ENCODE measurements at regions of chr1 and their contacts with region 1.

Region 1: GRCh38 chr1:241640029-241640818 is at the starts of genes CHML and OPN3:
- DNase-seq: peak; percentile 96
- ATAC-seq: peak; percentile 95
- H3K4me3 Mint-ChIP-seq: peak within 1 kb of the TSS; percentile 93
- H3K27ac Mint-ChIP-seq: peak within 1 kb of the TSS; percentile 91
- H3K4me1 Mint-ChIP-seq: peaks cover 55% of the 10 kb centered on the region
- H3K27me3 Mint-ChIP-seq: no peaks in the 10 kb centered on the region
- CTCF ChIP-seq: no peak
- total RNA-seq, gene CHML: 28.3 and 35.2 TPM in 2 replicates
- total RNA-seq, gene OPN3: 31.5 and 32.1 TPM in 2 replicates

Region 2: DNA sequence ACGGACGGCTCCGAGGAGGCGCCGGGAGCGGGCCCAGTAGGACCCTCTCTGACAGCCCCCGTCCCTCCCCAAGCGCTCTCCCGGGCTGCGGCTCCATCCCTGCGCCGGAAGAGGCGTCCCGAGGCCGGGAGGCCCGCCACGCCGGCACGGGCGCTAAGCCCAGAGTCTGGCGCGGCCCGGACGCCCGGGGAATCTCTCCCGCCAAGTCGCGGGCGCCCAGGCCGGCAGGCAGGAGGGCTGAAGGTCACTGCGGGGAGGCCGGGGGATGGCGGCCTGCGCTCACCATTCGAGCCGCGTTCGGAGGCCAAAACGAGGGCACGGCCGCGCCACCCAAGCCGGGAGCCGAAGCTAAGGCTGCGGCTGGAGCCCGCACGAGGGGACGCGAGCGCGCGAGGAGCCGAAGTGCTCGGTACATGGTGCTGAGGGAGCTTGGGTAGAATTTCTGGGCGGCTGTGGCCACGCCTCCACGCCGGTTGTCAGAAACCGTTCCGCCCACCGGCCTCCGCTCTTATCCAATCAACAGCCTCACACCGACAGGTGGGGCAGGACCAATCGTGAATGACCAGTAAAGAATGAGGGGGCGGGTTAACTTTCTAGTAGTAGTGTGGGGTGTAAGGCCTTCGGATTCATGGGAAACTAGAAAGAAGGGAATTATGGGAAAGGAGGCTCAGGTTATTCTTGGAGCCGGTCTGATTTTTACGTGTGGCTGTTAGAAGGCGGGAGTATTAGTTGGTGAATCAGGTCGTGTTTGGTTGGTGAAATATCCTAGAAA is 120.7 kb before region 1 on chr1 and contains the start of gene FH:
- CTCF ChIA-PET with region 1: no interaction called
- POLR2A ChIA-PET with region 1: interaction called, 14 read pairs
- intact Hi-C with region 1: loop called (anchors 1 kb)
- DNase-seq: peak; percentile 87
- ATAC-seq: peak; percentile 98
- H3K4me3 Mint-ChIP-seq: peak within 1 kb of the TSS; percentile 91
- H3K27ac Mint-ChIP-seq: peak within 1 kb of the TSS; percentile 72
- H3K4me1 Mint-ChIP-seq: peaks cover 21% of the 10 kb centered on the region
- H3K27me3 Mint-ChIP-seq: no peaks in the 10 kb centered on the region
- CTCF ChIP-seq: no peak
- total RNA-seq, gene FH: 56.0 and 58.3 TPM in 2 replicates

Region 3: GRCh38 chr1:241600496-241600901 is 39.7 kb before region 1 on chr1:
- CTCF ChIA-PET with region 1: no interaction called
- POLR2A ChIA-PET with region 1: interaction called, 6 read pairs
- intact Hi-C with region 1: loop called (anchors 5 kb)
- DNase-seq: no peak
- ATAC-seq: peak; percentile 64
- H3K4me3 Mint-ChIP-seq: peak overlapping the region; percentile 9
- H3K27ac Mint-ChIP-seq: peak overlapping the region; percentile 78
- H3K4me1 Mint-ChIP-seq: peaks cover 74% of the 10 kb centered on the region
- H3K27me3 Mint-ChIP-seq: no peaks in the 10 kb centered on the region
- CTCF ChIP-seq: no peak

Region 4: DNA sequence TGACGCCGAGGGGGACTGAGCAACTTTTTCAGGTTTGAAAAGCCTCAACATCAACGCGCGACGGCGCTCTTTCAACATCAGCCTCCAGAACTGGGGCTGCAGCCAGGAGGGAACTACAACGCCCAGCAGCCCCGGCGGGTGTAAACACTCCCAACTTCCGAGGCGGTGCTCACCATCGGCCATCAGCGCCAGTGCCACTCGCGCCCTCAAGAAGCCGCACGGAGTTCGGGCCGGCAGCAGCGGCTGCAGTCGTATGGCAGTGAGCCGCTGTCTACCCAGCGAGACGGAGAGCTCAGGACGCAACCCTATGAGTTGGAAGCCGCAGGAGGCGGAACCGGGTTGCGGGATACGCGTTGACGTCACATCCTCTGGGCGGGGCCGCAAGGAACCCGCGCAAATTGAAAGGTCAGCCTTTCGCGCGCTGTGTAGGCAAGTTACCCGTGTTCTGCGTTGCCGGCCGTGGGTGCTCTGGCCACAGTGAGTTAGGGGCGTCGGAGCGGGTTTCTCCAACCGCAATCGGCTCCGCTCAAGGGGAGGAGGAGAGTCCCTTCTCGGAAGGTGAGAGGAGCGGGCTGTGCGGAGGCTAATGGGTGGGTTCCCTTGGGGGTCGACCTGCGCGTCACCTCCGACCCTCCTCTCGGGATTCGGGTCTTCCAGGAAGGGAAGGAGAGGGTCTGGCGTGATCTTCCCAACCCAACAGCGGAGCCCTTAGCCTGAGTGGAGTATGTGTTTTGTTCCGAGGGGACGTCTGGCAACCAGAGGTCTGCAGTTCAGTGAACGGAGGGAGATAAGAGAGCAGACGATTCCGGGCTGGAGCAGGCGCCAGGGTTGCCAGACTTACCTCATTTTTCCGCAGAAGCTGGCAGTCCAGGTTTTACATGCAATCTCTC is 207.8 kb after region 1 on chr1 and contains the start of gene EXO1:
- CTCF ChIA-PET with region 1: no interaction called
- POLR2A ChIA-PET with region 1: interaction called, 8 read pairs
- intact Hi-C with region 1: loop called (anchors 1 kb)
- DNase-seq: peak; percentile 91
- ATAC-seq: peak; percentile 98
- H3K4me3 Mint-ChIP-seq: peak within 1 kb of the TSS; percentile 100
- H3K27ac Mint-ChIP-seq: peak within 1 kb of the TSS; percentile 99
- H3K4me1 Mint-ChIP-seq: peaks cover 15% of the 10 kb centered on the region
- H3K27me3 Mint-ChIP-seq: no peaks in the 10 kb centered on the region
- CTCF ChIP-seq: no peak
- total RNA-seq, gene EXO1: 2.3 TPM in 2 replicates

Measured in activated B cell treated with CpG ODN at 0.5 μM for 24 hours (primary cell).